HepG2 (cell line): ENCODE measurements at regions of chr6 and their contacts with region 1.

Region 1: DNA sequence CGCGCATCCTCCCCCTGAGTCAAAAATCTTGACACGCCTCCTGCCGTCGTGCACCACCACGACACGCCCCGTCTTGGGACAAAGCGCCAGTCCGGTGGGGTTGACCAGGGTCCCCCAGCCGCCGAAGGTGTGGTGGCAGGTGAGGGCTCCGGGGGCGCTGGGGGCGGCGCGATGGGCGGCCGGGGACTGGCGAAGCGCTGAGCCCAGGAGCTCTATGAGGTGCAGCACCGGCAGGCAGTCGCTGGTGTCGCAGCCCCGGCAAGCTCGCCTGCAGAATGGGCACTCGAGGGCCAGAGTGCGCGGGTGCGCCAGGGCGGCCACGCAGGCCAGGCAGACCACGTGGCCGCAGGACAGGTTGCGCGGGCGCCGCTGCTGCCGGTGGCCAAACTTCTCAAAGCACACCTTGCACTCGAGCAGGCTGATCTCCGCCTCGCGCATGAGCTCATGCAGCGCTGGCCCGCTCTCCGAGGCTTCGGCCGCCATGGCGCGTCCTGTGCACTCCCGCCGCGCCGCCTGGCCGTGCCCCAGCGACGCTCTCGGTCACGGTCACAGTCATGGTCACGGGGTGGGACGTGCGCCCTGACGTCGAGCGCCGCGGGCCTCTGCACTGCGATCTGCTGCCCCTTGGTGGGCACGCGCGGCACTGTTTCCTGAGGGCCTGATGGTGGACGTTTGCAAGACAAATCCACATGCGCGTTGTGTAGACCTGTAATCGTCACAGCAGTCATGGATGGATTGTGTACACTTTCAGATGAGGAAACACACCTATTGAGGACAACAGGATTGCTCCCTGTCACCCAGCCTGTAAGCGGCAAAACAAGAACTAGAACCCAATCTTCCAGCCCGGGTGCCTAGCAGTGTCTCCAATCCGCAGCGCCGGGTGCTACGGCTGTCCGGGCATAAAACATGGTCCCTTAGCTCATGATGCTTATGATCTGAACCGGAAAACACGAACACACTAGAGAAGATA is at the start of gene NHLRC1:
- DNase-seq: peak; percentile 84
- ATAC-seq: peak; percentile 96
- H3K4me3 ChIP-seq: peak within 1 kb of the TSS; percentile 52 to 67 (median 52)
- H3K27ac ChIP-seq: no peak within 1 kb of the TSS
- H3K4me1 ChIP-seq: peaks cover 24% of the 10 kb centered on the region
- H3K27me3 ChIP-seq: no peaks in the 10 kb centered on the region; a peak in 1 of 5 replicates
- CTCF ChIP-seq: peak; percentile 100
- EP300 ChIP-seq: peak; percentile 36 to 56; a peak in 2 of 4 replicates
- POLR2A ChIP-seq: no peak; a peak in 1 of 4 replicates
- RAD21 ChIP-seq: peak; percentile 99
- total RNA-seq, gene NHLRC1: 0.11 and 0.20 TPM in 2 replicates

Region 2: GRCh38 chr6:17816921-17817611 is 305.3 kb before region 1 on chr6:
- CTCF ChIA-PET with region 1: interaction called, 6 read pairs
- POLR2A ChIA-PET with region 1: no interaction called
- in situ Hi-C with region 1: no loop called
- intact Hi-C with region 1: loop called (anchors 1 kb)
- DNase-seq: peak; percentile 75
- ATAC-seq: peak; percentile 66
- H3K4me3 ChIP-seq: no peak overlapping the region
- H3K27ac ChIP-seq: no peak overlapping the region
- H3K4me1 ChIP-seq: peaks cover 14% of the 10 kb centered on the region
- H3K27me3 ChIP-seq: no peaks in the 10 kb centered on the region
- CTCF ChIP-seq: no peak; the same call in 1 of the 2 replicates
- EP300 ChIP-seq: no peak
- POLR2A ChIP-seq: no peak
- RAD21 ChIP-seq: no peak

Region 3: DNA sequence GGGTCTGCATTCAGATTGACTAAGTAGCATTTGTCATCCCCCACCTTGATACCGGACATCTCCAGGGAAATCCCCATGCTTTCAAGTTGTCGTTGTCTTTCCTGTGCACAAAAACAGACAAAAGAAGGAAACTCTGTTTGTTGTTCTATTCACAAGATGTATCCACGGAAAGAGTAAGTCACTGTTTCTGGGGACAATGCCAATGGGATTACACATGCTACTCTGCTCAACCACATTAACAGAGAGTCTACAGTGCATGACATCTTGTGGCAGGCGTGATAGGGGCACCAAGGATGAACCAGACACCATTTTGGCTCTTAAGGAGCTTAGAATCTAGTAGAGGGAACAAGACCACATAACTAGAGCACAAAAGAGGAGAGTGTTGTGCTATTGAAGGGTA is 291.3 kb before region 1 on chr6:
- CTCF ChIA-PET with region 1: no interaction called
- POLR2A ChIA-PET with region 1: no interaction called
- in situ Hi-C with region 1: loop called (anchors 10 kb)
- intact Hi-C with region 1: loop called (anchors 1 kb)
- DNase-seq: no peak
- ATAC-seq: no peak
- H3K4me3 ChIP-seq: no peak overlapping the region
- H3K27ac ChIP-seq: no peak overlapping the region
- H3K4me1 ChIP-seq: no peaks in the 10 kb centered on the region
- H3K27me3 ChIP-seq: no peaks in the 10 kb centered on the region
- CTCF ChIP-seq: no peak
- EP300 ChIP-seq: no peak
- POLR2A ChIP-seq: no peak
- RAD21 ChIP-seq: no peak

Region 4: GRCh38 chr6:17932330-17932852 is 190.0 kb before region 1 on chr6:
- CTCF ChIA-PET with region 1: no interaction called
- POLR2A ChIA-PET with region 1: no interaction called
- in situ Hi-C with region 1: no loop called
- intact Hi-C with region 1: loop called (anchors 2 kb)
- DNase-seq: peak; percentile 92
- ATAC-seq: peak; percentile 97
- H3K4me3 ChIP-seq: peak overlapping the region in 1 of 3 experiments; percentile 26; a peak in 1 of 6 replicates
- H3K27ac ChIP-seq: peak overlapping the region; percentile 73
- H3K4me1 ChIP-seq: peaks cover 68% of the 10 kb centered on the region
- H3K27me3 ChIP-seq: no peaks in the 10 kb centered on the region
- CTCF ChIP-seq: peak; percentile 24; the same call in 1 of the 2 replicates
- EP300 ChIP-seq: peak in 1 of 2 experiments; percentile 79; a peak in 2 of 4 replicates
- POLR2A ChIP-seq: no peak
- RAD21 ChIP-seq: 0 out of 2 replicates have a peak, but pooled peaks have one; percentile 33

Region 5: GRCh38 chr6:18081362-18082006 is 40.9 kb before region 1 on chr6:
- CTCF ChIA-PET with region 1: no interaction called
- POLR2A ChIA-PET with region 1: no interaction called
- in situ Hi-C with region 1: no loop called
- intact Hi-C with region 1: no loop called
- DNase-seq: peak; percentile 89
- ATAC-seq: peak; percentile 97
- H3K4me3 ChIP-seq: no peak overlapping the region
- H3K27ac ChIP-seq: no peak overlapping the region
- H3K4me1 ChIP-seq: peaks cover 15% of the 10 kb centered on the region
- H3K27me3 ChIP-seq: no peaks in the 10 kb centered on the region
- CTCF ChIP-seq: no peak
- EP300 ChIP-seq: peak in 1 of 2 experiments; percentile 54; a peak in 1 of 4 replicates
- POLR2A ChIP-seq: no peak
- RAD21 ChIP-seq: no peak